ENCODE measurements at regions of chr5 and their contacts with region 1.

Region 1: DNA sequence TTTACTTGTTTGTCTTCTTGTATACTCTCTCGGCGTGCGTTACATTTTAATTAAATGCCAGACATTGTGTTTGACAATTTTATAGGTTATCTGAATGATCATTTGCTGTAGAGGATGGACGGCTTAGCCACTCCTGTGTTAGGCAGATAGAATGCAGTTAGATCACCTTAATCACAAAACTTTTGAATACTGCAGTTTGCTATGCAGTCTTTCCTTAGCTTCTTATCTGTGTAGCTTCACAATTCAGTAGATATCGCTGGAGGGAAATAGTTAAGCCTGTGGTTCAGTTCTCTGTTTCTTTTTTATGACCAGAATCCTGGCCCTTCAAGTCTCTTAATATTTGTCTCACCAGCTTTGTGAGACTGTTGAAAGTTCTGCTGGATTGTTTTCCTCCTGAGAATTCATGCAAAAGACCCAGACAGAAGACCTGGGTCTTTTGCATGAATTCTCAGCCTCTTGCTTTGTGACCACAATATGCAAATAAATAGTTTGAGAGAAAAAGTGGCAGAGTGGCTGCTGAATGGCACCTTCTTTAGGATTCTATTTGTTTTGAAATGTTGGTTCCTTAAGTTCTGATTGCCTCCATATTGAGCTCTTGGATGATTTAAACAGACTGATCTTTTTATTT is 40.2 kb downstream of the RASA1 start:
- DNase-seq: peak; percentile 59
- ATAC-seq: peak; percentile 78
- H3K4me3 ChIP-seq: peak overlapping the region in 1 of 5 experiments; percentile 9
- H3K4me3 Mint-ChIP-seq: peak overlapping the region; percentile 27
- H3K27ac ChIP-seq: no peak overlapping the region
- H3K27ac Mint-ChIP-seq: no peak overlapping the region
- H3K4me1 ChIP-seq: peaks cover 10 to 19% of the 10 kb centered on the region in 2 donors
- H3K4me1 Mint-ChIP-seq: peaks cover 53% of the 10 kb centered on the region
- H3K27me3 ChIP-seq: no peaks in the 10 kb centered on the region
- H3K27me3 Mint-ChIP-seq: no peaks in the 10 kb centered on the region
- CTCF ChIP-seq: no peak

Region 2: GRCh38 chr5:87340716-87341115 is 32.8 kb after region 1 on chr5:
- CTCF ChIA-PET with region 1: no interaction called
- POLR2A ChIA-PET with region 1: no interaction called
- intact Hi-C with region 1: loop called (anchors 5 kb)
- DNase-seq: peak; percentile 28
- ATAC-seq: peak; percentile 33
- H3K4me3 ChIP-seq: no peak overlapping the region
- H3K4me3 Mint-ChIP-seq: peak overlapping the region; percentile 40
- H3K27ac ChIP-seq: peak overlapping the region; percentile 36 to 83
- H3K27ac Mint-ChIP-seq: peak overlapping the region; percentile 50
- H3K4me1 ChIP-seq: peaks cover 0 to 11% of the 10 kb centered on the region in 2 donors
- H3K4me1 Mint-ChIP-seq: peaks cover 16% of the 10 kb centered on the region
- H3K27me3 ChIP-seq: no peaks in the 10 kb centered on the region
- H3K27me3 Mint-ChIP-seq: no peaks in the 10 kb centered on the region
- CTCF ChIP-seq: no peak

Measured in B cell (primary cell).